Activated CD4-positive, alpha-beta memory T cell treated with anti-CD3 and anti-CD28 coated beads for 36 hours (primary cell): ENCODE measurements at regions of chr7 and their contacts with region 1.

Region 1: GRCh38 chr7:7920481-7920880 is 48.1 kb upstream of the GLCCI1 start:
- DNase-seq: peak; percentile 32
- H3K4me3 Mint-ChIP-seq: peak overlapping the region; percentile 55
- H3K27ac Mint-ChIP-seq: no peak overlapping the region
- H3K4me1 Mint-ChIP-seq: peaks cover 41% of the 10 kb centered on the region
- H3K27me3 Mint-ChIP-seq: no peaks in the 10 kb centered on the region

Region 2: DNA sequence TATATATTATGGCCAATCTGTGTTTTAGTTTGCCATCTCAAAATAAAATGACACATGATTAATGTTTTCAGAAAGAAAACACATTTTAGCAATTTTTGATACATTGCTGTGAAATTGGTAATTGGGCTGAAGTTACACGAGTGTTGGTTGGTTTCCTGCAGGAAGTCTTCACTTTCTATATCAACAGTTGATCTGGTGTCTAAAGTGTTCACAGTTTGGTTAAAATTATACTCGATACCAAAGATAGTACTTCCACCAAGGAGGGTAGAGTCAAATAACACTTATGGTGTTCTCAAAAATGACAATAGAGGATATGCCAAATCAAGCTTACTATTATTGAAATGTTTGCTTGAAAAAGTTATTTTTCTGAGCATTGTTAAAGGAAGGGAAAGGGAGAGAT is 72.2 kb before region 1 on chr7:
- CTCF ChIA-PET with region 1: no interaction called
- POLR2A ChIA-PET with region 1: no interaction called
- intact Hi-C with region 1: loop called (anchors 5 kb)
- DNase-seq: no peak
- H3K4me3 Mint-ChIP-seq: no peak overlapping the region
- H3K27ac Mint-ChIP-seq: no peak overlapping the region
- H3K4me1 Mint-ChIP-seq: peaks cover 28% of the 10 kb centered on the region
- H3K27me3 Mint-ChIP-seq: no peaks in the 10 kb centered on the region

Region 3: GRCh38 chr7:7944619-7945282 is 24.3 kb after region 1 on chr7:
- CTCF ChIA-PET with region 1: no interaction called
- POLR2A ChIA-PET with region 1: interaction called, 11 read pairs
- intact Hi-C with region 1: loop called (anchors 1 kb)
- DNase-seq: peak; percentile 84
- H3K4me3 Mint-ChIP-seq: peak overlapping the region; percentile 71
- H3K27ac Mint-ChIP-seq: peak overlapping the region; percentile 89
- H3K4me1 Mint-ChIP-seq: peaks cover 26% of the 10 kb centered on the region
- H3K27me3 Mint-ChIP-seq: no peaks in the 10 kb centered on the region

Region 4: GRCh38 chr7:7996576-7996975 is 76.1 kb after region 1 on chr7:
- CTCF ChIA-PET with region 1: no interaction called
- POLR2A ChIA-PET with region 1: no interaction called
- intact Hi-C with region 1: no loop called
- DNase-seq: no peak
- H3K4me3 Mint-ChIP-seq: no peak overlapping the region
- H3K27ac Mint-ChIP-seq: peak overlapping the region; percentile 11
- H3K4me1 Mint-ChIP-seq: peaks cover 23% of the 10 kb centered on the region
- H3K27me3 Mint-ChIP-seq: no peaks in the 10 kb centered on the region

Region 5: DNA sequence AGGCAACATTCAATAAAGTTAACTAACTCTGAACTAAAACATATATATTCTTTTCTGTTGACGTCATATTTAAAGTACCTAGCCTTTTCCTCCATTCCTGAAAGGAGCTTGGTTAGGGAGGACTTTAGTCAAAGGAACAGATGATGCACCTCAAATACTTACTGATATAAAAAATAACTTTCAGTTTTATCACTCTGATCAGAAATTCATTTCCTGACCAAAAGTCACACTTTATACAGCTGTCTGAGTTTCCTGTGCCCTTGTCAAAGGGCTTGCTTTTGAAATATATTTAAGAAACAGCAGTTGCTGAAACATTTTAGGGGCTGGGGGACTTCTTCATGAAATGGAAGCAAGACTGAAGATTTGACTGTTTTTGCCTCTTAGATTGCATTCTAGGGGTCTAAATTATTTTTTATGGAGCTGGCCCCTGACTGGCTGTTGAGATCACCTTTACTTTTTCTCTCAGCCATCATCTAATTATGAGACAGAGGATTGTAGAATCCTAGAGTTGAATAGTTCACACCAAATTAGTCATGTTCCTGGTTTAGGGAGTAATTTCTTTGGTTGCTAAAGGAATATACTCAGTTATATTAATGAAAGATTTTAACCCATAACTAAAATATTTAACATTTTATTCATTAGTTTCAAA is 94.7 kb after region 1 on chr7:
- CTCF ChIA-PET with region 1: no interaction called
- POLR2A ChIA-PET with region 1: no interaction called
- intact Hi-C with region 1: loop called (anchors 5 kb)
- DNase-seq: no peak
- H3K4me3 Mint-ChIP-seq: no peak overlapping the region
- H3K27ac Mint-ChIP-seq: peak overlapping the region; percentile 56
- H3K4me1 Mint-ChIP-seq: peaks cover 40% of the 10 kb centered on the region
- H3K27me3 Mint-ChIP-seq: no peaks in the 10 kb centered on the region

Region 6: DNA sequence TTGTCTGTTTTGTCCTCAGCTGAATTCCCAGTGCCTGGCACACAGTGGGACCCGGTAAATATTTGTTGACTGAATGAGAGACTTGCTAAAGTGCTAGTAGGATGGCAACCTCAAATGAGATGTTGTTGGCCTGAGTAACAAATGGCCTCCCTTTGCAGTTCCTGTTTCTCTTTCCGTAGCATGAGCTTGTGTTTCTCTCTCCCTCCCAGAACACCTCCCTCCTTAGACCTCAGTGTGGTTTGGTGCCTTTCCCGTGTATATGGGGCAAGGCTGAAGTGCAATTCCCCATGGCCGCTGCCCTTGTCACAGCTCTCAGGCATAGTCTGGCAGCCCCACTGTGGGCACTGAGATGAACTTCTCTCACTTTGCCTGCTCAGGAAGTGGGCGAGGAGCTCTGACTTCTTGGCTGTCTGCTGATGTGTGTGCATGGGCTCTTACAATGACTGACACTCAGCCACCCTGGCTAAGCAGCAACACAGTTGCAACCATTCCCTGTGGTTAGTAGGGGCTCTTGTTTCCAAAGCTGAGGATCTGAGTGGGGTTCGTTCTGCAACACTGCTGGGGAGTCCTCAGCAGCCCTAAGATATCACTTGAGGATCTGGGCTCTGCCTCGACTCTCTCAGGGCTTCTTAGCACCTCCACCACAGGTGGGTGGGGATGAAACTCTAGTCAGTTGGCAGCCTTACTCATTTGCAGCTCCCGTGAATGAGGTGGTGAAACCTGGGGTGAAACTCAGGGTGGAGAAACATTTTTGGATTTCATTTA is 205.4 kb after region 1 on chr7:
- CTCF ChIA-PET with region 1: interaction called, 3 read pairs
- POLR2A ChIA-PET with region 1: no interaction called
- intact Hi-C with region 1: loop called (anchors 1 kb)
- DNase-seq: peak; percentile 89
- H3K4me3 Mint-ChIP-seq: peak overlapping the region; percentile 66
- H3K27ac Mint-ChIP-seq: peak overlapping the region; percentile 92
- H3K4me1 Mint-ChIP-seq: peaks cover 78% of the 10 kb centered on the region
- H3K27me3 Mint-ChIP-seq: no peaks in the 10 kb centered on the region